Breast epithelium (tissue), 4 donors: ENCODE measurements at regions of chr12 and their contacts with region 1.

Region 1: DNA sequence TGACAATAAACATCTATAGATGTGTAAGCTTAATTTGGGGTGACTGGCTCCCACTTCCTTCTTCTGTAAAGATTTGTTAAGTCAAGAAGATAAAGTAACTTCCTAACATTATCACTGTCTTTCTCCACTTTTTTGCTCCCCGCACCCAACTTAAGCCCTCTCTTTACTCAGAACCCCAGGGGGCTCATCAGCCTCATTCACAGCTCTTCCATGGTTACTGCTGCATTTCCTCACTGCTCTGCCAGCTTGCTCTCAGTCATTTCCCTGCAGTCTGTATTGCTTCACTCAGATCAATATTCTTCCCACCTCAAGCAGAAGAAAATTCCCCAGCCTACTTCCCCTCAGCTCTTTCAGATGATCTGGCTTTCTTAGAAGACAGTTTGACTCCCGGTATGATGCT is 102.0 kb downstream of the PIK3C2G start:
- DNase-seq: no peak
- H3K4me3 ChIP-seq: no peak overlapping the region
- H3K27ac ChIP-seq: no peak overlapping the region
- H3K4me1 ChIP-seq: no peaks in the 10 kb centered on the region
- H3K27me3 ChIP-seq: no peaks in the 10 kb centered on the region
- CTCF ChIP-seq: no peak
- POLR2A ChIP-seq: no peak

Region 2: GRCh38 chr12:18345021-18345735 is 18.1 kb before region 1 on chr12:
- intact Hi-C with region 1: loop called (anchors 2 kb)
- DNase-seq: no peak
- H3K4me3 ChIP-seq: no peak overlapping the region
- H3K27ac ChIP-seq: no peak overlapping the region
- H3K4me1 ChIP-seq: no peaks in the 10 kb centered on the region
- H3K27me3 ChIP-seq: no peaks in the 10 kb centered on the region
- CTCF ChIP-seq: no peak
- POLR2A ChIP-seq: no peak